ENCODE measurements at regions of chr19 and their contacts with region 1.

Region 1: GRCh38 chr19:43463381-43464136 is 1.8 kb downstream of the LYPD3 start:
- DNase-seq: peak; percentile 99 to 100 (median 99)
- ATAC-seq: peak; percentile 79
- H3K4me3 ChIP-seq: peak overlapping the region; percentile 75 to 89
- H3K4me3 Mint-ChIP-seq: peak overlapping the region; percentile 93
- H3K27ac ChIP-seq: peak overlapping the region; percentile 85 to 91
- H3K27ac Mint-ChIP-seq: peak overlapping the region; percentile 98
- H3K4me1 ChIP-seq: peaks cover 29% of the 10 kb centered on the region
- H3K4me1 Mint-ChIP-seq: peaks cover 53% of the 10 kb centered on the region
- H3K27me3 ChIP-seq: no peaks in the 10 kb centered on the region
- H3K27me3 Mint-ChIP-seq: no peaks in the 10 kb centered on the region
- CTCF ChIP-seq: no peak

Region 2: DNA sequence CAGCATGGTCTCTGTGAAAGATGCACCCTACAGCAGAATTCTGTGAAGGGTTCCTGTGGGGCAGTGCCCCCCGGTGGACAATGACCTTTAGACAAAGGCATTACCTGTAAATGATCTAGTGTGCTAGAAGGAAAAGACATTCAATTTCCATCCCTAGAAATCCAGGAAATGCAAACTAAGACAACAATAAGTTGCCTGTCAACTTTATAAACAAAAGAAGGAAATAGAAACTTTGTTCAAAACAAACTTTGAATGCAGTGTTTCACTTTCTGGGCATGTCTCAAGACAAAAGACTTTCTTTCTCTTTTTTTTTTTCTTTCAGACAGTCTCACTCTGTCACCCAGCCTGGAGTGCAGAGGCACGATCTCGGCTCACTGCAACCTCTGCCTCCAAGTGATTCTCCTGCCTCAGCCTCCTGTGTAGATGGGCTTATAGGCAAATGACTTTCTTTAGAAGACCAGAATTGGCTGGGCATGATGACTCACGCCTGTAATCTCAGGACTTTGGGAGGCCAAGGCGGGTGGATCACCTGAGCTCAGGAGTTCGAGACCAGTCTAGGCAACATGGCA is 33.3 kb before region 1 on chr19:
- CTCF ChIA-PET with region 1: interaction called, 8 read pairs
- POLR2A ChIA-PET with region 1: no interaction called
- intact Hi-C with region 1: loop called in 1 of 2 experiments (anchors 1 kb)
- DNase-seq: peak in 1 of 9 experiments; percentile 48
- ATAC-seq: no peak
- H3K4me3 ChIP-seq: no peak overlapping the region
- H3K4me3 Mint-ChIP-seq: no peak overlapping the region
- H3K27ac ChIP-seq: no peak overlapping the region
- H3K27ac Mint-ChIP-seq: no peak overlapping the region
- H3K4me1 ChIP-seq: peaks cover 7% of the 10 kb centered on the region
- H3K4me1 Mint-ChIP-seq: peaks cover 18% of the 10 kb centered on the region
- H3K27me3 ChIP-seq: no peaks in the 10 kb centered on the region
- H3K27me3 Mint-ChIP-seq: no peaks in the 10 kb centered on the region
- CTCF ChIP-seq: no peak

Region 3: GRCh38 chr19:43474986-43475705 is 11.6 kb after region 1 on chr19:
- CTCF ChIA-PET with region 1: interaction called, 5 read pairs
- POLR2A ChIA-PET with region 1: interaction called, 50 read pairs
- intact Hi-C with region 1: loop called (anchors 1 kb)
- DNase-seq: peak; percentile 92 to 99 (median 96)
- ATAC-seq: peak; percentile 84
- H3K4me3 ChIP-seq: peak overlapping the region; percentile 8 to 48
- H3K4me3 Mint-ChIP-seq: peak overlapping the region; percentile 82
- H3K27ac ChIP-seq: peak overlapping the region; percentile 72 to 89
- H3K27ac Mint-ChIP-seq: peak overlapping the region; percentile 97
- H3K4me1 ChIP-seq: peaks cover 48% of the 10 kb centered on the region
- H3K4me1 Mint-ChIP-seq: peaks cover 42% of the 10 kb centered on the region
- H3K27me3 ChIP-seq: no peaks in the 10 kb centered on the region
- H3K27me3 Mint-ChIP-seq: no peaks in the 10 kb centered on the region
- CTCF ChIP-seq: no peak

Region 4: GRCh38 chr19:43526884-43527859 is 63.6 kb after region 1 on chr19 and contains the start of gene ETHE1:
- CTCF ChIA-PET with region 1: interaction called, 3 read pairs
- POLR2A ChIA-PET with region 1: interaction called, 10 read pairs
- intact Hi-C with region 1: no loop called
- DNase-seq: peak in 8 of 9 experiments; percentile 57 to 81 (median 72)
- ATAC-seq: peak; percentile 76
- H3K4me3 ChIP-seq: peak within 1 kb of the TSS; percentile 88 to 93
- H3K4me3 Mint-ChIP-seq: peak within 1 kb of the TSS; percentile 94
- H3K27ac ChIP-seq: peak within 1 kb of the TSS; percentile 55 to 65
- H3K27ac Mint-ChIP-seq: peak within 1 kb of the TSS; percentile 73
- H3K4me1 ChIP-seq: peaks cover 16% of the 10 kb centered on the region
- H3K4me1 Mint-ChIP-seq: peaks cover 26% of the 10 kb centered on the region
- H3K27me3 ChIP-seq: no peaks in the 10 kb centered on the region
- H3K27me3 Mint-ChIP-seq: no peaks in the 10 kb centered on the region
- CTCF ChIP-seq: no peak
- total RNA-seq, gene ETHE1: 17.2 to 17.6 TPM

Region 5: DNA sequence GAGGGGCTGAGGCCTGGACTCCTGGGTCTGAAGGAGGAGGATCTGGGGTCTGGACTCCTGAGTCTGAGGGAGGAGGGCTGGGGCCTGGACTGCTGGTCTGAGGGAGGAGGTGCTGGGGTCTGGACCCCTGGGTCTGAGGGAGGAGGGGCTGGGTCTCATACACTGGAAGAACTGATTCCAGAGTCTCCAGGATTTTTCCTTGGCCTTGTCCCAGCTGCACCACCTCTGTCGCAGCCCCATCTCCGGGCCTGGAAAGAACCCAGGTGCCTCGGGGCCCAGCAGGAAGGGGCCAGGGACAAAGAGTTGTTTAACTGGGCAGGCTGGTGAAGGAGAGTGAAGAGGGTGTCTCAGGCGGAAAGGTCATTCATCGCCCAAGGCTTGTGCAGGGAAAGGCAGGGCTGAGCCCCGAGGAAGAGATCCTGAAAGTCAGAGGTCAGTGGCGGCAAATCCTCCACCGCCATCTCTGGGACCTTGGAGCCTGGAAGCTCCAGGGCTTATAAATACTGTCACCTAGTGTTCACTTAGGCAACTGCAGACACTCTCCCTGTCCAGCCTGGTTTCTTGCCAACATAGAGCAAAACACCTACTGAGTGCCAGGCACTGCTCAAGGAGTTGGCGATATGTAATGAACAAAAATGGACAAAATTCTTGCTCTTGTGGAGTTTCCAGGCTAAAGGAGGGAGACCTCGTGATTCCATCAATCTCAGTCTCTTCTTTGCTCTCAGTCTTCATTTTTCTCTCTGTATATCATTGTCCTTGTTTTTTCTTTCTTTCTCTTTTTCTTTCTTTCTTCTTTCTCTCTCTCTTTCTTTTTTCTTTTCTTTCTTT is 321.6 kb after region 1 on chr19:
- CTCF ChIA-PET with region 1: no interaction called
- POLR2A ChIA-PET with region 1: no interaction called
- intact Hi-C with region 1: loop called in 1 of 2 experiments (anchors 10 kb)
- DNase-seq: peak in 8 of 9 experiments; percentile 27 to 82 (median 52)
- ATAC-seq: peak; percentile 38
- H3K4me3 ChIP-seq: no peak overlapping the region
- H3K4me3 Mint-ChIP-seq: peak overlapping the region; percentile 56
- H3K27ac ChIP-seq: peak overlapping the region; percentile 25 to 54
- H3K27ac Mint-ChIP-seq: peak overlapping the region; percentile 96
- H3K4me1 ChIP-seq: peaks cover 36% of the 10 kb centered on the region
- H3K4me1 Mint-ChIP-seq: peaks cover 40% of the 10 kb centered on the region
- H3K27me3 ChIP-seq: peaks cover 0 to 4% of the 10 kb centered on the region in 2 experiments
- H3K27me3 Mint-ChIP-seq: peaks cover 9% of the 10 kb centered on the region
- CTCF ChIP-seq: peak; percentile 94